ENCODE measurements at regions of chrX and their contacts with region 1.

Region 1: DNA sequence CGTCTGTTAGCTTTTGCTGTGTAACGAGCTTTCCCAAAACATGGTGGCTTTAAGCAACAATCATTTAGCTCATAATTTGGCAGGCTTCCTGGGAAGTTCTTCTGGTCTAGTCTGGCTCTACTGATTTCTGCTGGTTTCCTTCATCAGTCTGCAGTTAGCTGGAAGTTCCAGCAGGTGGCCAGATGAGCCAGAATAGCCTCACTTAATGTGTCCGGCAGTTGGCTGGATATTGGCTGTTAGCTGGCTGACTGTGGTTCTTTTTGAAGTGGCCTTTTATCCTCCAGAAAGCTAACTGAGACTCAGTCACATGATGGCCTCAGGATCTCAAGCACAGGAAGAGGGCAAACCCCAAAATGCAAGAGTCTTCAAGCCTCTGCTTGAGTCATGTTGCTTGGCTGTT is 34.9 kb downstream of the FTHL17 start:
- DNase-seq: peak; percentile 1
- H3K4me3 ChIP-seq: no peak overlapping the region
- H3K27ac ChIP-seq: no peak overlapping the region
- H3K27me3 ChIP-seq: no peaks in the 10 kb centered on the region
- CTCF ChIP-seq: peak; percentile 69

Region 2: DNA sequence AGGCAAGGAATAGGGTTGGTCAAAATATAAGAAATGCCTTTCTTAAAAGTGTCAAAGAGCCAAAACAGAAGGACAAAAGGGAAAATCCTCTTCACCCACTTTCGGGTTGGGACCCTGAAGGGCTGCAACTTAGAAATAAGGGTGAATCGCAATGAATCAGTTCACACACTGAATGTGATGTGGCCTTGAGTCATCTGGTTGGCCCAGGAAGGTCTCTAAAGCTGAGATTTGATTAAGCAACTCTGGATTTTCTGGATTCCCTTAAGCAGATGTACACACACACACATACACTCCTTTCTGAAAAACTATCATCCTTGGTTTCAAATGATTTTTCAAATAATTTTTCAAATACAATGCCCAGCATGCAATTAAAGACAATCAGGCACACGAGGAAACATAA is 160.9 kb before region 1 on chrX:
- CTCF ChIA-PET with region 1: no interaction called
- POLR2A ChIA-PET with region 1: no interaction called
- DNase-seq: peak; percentile 46
- H3K4me3 ChIP-seq: no peak overlapping the region
- H3K27ac ChIP-seq: peak overlapping the region; percentile 47
- H3K27me3 ChIP-seq: no peaks in the 10 kb centered on the region
- CTCF ChIP-seq: no peak

Region 3: GRCh38 chrX:31053621-31054020 is 16.7 kb after region 1 on chrX:
- CTCF ChIA-PET with region 1: no interaction called
- POLR2A ChIA-PET with region 1: no interaction called
- DNase-seq: no peak
- H3K4me3 ChIP-seq: no peak overlapping the region
- H3K27ac ChIP-seq: no peak overlapping the region
- H3K27me3 ChIP-seq: peaks cover 2% of the 10 kb centered on the region
- CTCF ChIP-seq: no peak

Region 4: DNA sequence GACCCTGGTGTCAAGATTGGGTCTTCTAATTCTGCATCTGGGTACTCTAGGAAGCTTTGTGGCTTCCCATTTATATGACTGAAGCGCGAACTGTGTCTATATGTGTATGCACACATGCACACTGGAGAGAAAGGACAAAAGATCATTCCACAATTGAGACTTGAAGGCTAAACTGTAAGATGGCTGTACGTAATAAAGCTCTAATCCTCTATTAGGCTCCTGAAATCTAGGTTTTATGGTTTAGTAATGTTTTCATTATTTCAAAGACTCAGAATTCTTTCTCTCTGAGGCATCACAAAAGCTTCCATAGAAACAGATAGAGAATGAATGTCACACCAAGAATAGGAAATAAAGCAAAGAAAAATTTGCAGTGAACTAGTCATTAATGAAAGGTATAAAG is 355.6 kb after region 1 on chrX:
- CTCF ChIA-PET with region 1: no interaction called
- POLR2A ChIA-PET with region 1: no interaction called
- DNase-seq: no peak
- H3K4me3 ChIP-seq: no peak overlapping the region
- H3K27ac ChIP-seq: no peak overlapping the region
- H3K27me3 ChIP-seq: no peaks in the 10 kb centered on the region
- CTCF ChIP-seq: no peak

Region 5: DNA sequence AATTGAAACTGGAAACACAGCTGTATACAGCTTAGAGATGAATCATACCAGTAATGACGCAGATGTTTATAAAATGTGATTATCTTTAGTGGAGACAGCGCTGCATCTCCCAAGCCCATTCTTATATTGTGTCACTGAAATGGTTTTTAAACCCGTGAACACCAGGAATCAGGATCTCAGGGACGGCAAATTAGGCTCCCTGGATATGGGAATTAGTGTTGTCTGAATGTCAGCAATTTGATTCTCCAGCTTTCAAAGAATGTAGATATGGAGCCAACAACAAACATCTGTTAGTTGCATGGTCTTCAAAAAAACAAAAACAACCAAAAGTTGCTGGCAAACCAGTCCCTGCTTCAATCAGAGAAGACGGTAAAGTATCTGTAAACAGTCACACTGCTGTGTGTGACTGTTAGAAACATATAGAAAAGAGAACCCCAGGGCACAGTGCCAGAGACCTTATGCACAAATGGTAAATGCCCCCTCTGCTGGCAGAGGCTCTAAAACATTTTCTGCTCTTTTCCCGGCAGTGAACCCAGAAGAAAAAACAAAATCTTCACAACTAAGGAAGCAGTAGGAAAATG is 386.8 kb after region 1 on chrX:
- CTCF ChIA-PET with region 1: interaction called, 11 read pairs
- POLR2A ChIA-PET with region 1: no interaction called
- DNase-seq: no peak
- H3K4me3 ChIP-seq: 0 out of 2 replicates have a peak overlapping the region, but pooled peaks have one; percentile 13
- H3K27ac ChIP-seq: peak overlapping the region; percentile 47
- H3K27me3 ChIP-seq: no peaks in the 10 kb centered on the region
- CTCF ChIP-seq: peak; percentile 51

Region 6: DNA sequence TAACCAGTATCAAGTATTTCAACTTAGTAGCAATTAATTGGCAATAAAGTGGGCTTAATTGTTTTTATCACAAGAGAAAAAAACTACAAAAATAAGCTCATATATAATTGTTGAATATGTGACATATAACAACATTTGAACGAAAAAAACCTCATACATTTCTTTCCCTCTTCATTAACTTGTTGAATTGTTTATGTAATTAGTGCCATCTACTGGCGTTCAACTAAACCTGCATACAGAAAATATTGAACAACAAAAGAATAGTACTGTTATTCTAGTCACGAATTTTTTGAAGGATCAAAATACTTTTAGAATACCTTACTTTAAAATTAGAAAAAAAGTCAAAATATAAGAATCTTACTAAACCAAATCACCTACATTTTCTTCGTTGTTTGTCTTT is 621.5 kb after region 1 on chrX:
- CTCF ChIA-PET with region 1: interaction called, 252 read pairs
- POLR2A ChIA-PET with region 1: no interaction called
- DNase-seq: no peak
- H3K4me3 ChIP-seq: no peak overlapping the region
- H3K27ac ChIP-seq: no peak overlapping the region
- H3K27me3 ChIP-seq: no peaks in the 10 kb centered on the region
- CTCF ChIP-seq: peak; percentile 42

Measured in AG04450 (cell line).